Upper lobe of right lung (tissue), 1 donor: ENCODE measurements at regions of chr18 and their contacts with region 1.

Region 1: GRCh38 chr18:12883684-12884405 is at the start of gene PTPN2:
- DNase-seq: peak; percentile 97
- ATAC-seq: peak; percentile 92
- H3K4me3 ChIP-seq: peak within 1 kb of the TSS; percentile 76
- H3K27ac ChIP-seq: peak within 1 kb of the TSS; percentile 100
- H3K4me1 ChIP-seq: peaks cover 41% of the 10 kb centered on the region
- H3K27me3 ChIP-seq: no peaks in the 10 kb centered on the region
- CTCF ChIP-seq: no peak
- total RNA-seq, gene PTPN2: 53.9 TPM

Region 2: GRCh38 chr18:12791610-12792009 is 92.2 kb before region 1 on chr18:
- intact Hi-C with region 1: no loop called
- DNase-seq: no peak
- ATAC-seq: no peak
- H3K4me3 ChIP-seq: no peak overlapping the region
- H3K27ac ChIP-seq: no peak overlapping the region
- H3K4me1 ChIP-seq: no peaks in the 10 kb centered on the region
- H3K27me3 ChIP-seq: no peaks in the 10 kb centered on the region
- CTCF ChIP-seq: no peak

Region 3: GRCh38 chr18:12820506-12820905 is 63.3 kb before region 1 on chr18:
- intact Hi-C with region 1: loop called (anchors 10 kb)
- DNase-seq: no peak
- ATAC-seq: no peak
- H3K4me3 ChIP-seq: no peak overlapping the region
- H3K27ac ChIP-seq: no peak overlapping the region
- H3K4me1 ChIP-seq: no peaks in the 10 kb centered on the region
- H3K27me3 ChIP-seq: no peaks in the 10 kb centered on the region
- CTCF ChIP-seq: no peak